Activated CD4-positive, alpha-beta T cell treated with anti-CD3 and anti-CD28 coated beads, Interleukin-2, amount 10 ng/mL, durations not matched to agents 24 days and 14 days (primary cell): ENCODE measurements at regions of chr22 and their contacts with region 1.

Region 1: DNA sequence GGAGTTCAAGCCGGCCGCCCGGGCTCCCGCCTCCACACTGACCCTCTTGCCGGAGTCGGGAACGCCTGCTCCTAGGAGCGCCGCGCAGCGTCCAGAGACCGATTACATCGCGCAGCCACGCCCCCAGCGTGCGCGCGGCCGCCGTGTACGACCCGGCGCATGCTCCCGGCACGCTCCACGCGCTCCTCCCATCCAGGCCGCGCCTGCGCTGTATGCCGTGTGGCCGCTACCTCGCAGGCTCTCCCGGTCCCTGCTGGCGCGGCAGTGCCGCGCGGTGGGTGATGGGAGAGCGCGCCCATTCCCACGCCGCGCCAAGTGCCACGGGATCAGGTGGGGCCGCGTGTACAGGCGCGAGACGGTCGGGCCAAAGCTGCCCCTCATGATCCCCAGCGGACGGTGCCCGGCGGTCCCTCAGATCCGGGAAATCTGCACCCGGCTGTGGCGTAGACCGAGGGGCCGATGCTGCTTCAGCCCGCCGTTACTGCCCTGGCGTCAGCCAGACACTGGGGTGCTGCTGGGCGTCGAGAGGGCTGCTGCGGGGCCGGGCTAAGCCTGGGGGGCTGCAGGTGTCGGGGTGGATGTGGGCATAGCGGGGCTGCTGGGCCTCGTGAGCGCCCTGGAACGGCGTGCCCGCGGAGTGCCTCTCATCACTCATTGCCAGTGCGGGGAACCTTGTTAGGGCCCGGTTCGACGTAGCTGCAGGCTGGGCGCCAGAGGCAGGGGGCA is at the starts of genes GNB1L and RTL10:
- DNase-seq: peak; percentile 99
- H3K4me3 Mint-ChIP-seq: peak within 1 kb of the TSS; percentile 92
- H3K27ac Mint-ChIP-seq: peak within 1 kb of the TSS; percentile 96
- H3K4me1 Mint-ChIP-seq: peaks cover 24% of the 10 kb centered on the region
- H3K27me3 Mint-ChIP-seq: no peaks in the 10 kb centered on the region
- total RNA-seq, gene GNB1L: 21.1 and 21.4 TPM in 2 replicates
- total RNA-seq, gene RTL10: 20.0 and 23.4 TPM in 2 replicates

Region 2: GRCh38 chr22:19891317-19892256 is 36.6 kb after region 1 on chr22:
- intact Hi-C with region 1: loop called (anchors 1 kb)
- DNase-seq: peak; percentile 90
- H3K4me3 Mint-ChIP-seq: peak overlapping the region; percentile 80
- H3K27ac Mint-ChIP-seq: peak overlapping the region; percentile 94
- H3K4me1 Mint-ChIP-seq: peaks cover 39% of the 10 kb centered on the region
- H3K27me3 Mint-ChIP-seq: no peaks in the 10 kb centered on the region

Region 3: GRCh38 chr22:19941365-19942082 is 86.6 kb after region 1 on chr22 and contains the starts of genes COMT and TXNRD2:
- intact Hi-C with region 1: loop called (anchors 1 kb)
- DNase-seq: peak; percentile 93
- H3K4me3 Mint-ChIP-seq: peak within 1 kb of the TSS; percentile 97
- H3K27ac Mint-ChIP-seq: peak within 1 kb of the TSS; percentile 90
- H3K4me1 Mint-ChIP-seq: peaks cover 27% of the 10 kb centered on the region
- H3K27me3 Mint-ChIP-seq: no peaks in the 10 kb centered on the region
- total RNA-seq, gene COMT: 104 and 110 TPM in 2 replicates
- total RNA-seq, gene TXNRD2: 18.4 and 23.5 TPM in 2 replicates